Endothelial cell of umbilical vein (primary cell): ENCODE measurements at regions of chr18 and their contacts with region 1.

Region 1: GRCh38 chr18:13800505-13801259 is 23.3 kb upstream of the MC5R start:
- DNase-seq: peak; percentile 61
- H3K4me3 ChIP-seq: peak overlapping the region in 1 of 3 experiments; percentile 37
- H3K27ac ChIP-seq: no peak overlapping the region
- H3K4me1 ChIP-seq: peaks cover 24% of the 10 kb centered on the region
- H3K27me3 ChIP-seq: peaks cover 3 to 10% of the 10 kb centered on the region in 2 experiments
- CTCF ChIP-seq: peak; percentile 57 to 78
- POLR2A ChIP-seq: no peak

Region 2: DNA sequence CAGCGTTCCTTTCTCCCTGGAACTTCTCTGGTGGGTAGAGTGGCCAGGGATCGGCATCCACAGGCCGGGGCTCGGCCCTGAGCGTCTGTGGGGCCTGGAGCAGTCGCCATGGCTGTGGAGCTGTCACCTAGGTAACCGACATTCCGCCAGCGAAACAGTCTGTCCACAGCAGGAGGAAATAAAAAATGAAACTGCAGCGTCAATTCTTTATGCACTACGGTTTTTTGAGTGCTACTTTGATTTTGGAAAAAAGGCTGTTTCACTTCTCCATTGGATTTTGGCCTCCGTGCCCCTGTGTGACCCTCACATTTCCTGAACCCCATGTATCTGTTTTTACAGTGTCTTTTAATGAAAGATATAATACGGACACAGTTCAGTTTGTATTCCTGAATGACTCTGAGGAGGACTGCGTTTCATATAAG is 418.7 kb before region 1 on chr18:
- CTCF ChIA-PET with region 1: no interaction called
- POLR2A ChIA-PET with region 1: no interaction called
- dilution Hi-C with region 1: no loop called
- intact Hi-C with region 1: loop called (anchors 2 kb)
- DNase-seq: peak; percentile 71
- H3K4me3 ChIP-seq: peak overlapping the region in 1 of 3 experiments; percentile 49
- H3K27ac ChIP-seq: peak overlapping the region; percentile 94
- H3K4me1 ChIP-seq: peaks cover 31% of the 10 kb centered on the region
- H3K27me3 ChIP-seq: no peaks in the 10 kb centered on the region
- CTCF ChIP-seq: no peak
- POLR2A ChIP-seq: no peak

Region 3: DNA sequence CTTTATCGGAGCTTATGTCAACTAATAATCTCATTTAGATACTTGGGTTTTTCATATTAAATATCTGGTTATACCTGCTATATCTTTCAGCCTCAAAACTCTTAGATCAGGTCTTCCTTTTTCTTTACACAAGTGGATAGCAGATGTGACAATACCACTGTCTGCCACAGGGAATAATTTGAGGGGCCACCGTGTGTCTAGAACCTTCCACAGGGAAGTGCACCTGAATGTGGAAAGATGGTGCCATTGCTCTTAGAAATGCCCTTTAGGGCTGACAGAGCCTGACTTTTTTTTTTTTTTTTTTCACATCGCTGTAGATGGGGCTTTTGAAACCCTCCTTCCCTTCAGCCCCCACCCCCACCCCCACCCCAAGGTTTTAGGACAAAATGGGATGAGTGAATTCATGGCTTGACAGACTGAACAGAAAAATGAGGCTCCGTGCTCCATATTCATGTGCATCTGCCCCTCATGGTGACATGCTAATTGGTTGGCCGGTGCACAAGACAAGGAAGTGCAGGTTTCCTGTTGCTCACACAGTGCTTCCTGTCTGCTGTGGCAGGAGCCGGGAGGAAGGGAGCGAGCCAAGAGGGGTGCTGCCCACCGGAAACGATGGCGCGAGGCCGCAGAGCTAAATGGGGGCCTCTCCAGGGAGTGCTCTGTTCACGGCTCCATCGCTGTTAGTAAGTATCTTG is 336.1 kb before region 1 on chr18:
- CTCF ChIA-PET with region 1: no interaction called
- POLR2A ChIA-PET with region 1: no interaction called
- dilution Hi-C with region 1: no loop called
- intact Hi-C with region 1: loop called (anchors 10 kb)
- DNase-seq: peak; percentile 94
- H3K4me3 ChIP-seq: peak overlapping the region in 1 of 3 experiments; percentile 39
- H3K27ac ChIP-seq: peak overlapping the region; percentile 98
- H3K4me1 ChIP-seq: peaks cover 24% of the 10 kb centered on the region
- H3K27me3 ChIP-seq: no peaks in the 10 kb centered on the region
- CTCF ChIP-seq: no peak
- POLR2A ChIP-seq: peak; percentile 54

Region 4: DNA sequence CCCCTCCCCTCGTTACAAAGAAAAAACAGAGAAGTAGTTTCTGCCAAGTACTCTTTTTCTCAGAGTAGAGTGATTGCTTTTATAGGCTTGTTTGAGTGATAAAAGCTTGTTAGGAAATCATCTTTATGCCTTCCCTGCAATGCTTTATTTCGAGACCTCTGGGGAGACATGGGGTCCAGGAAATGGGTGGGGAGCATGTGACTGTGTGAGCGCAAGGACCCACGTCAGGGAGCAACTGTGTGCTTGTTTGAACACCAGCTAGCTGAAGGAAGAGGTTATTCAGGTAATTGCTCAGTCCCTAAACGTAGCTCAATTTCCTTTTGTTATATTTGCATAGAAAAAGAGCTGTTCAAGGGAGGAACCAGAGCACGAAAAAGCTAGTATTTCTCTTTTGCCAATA is 261.6 kb before region 1 on chr18:
- CTCF ChIA-PET with region 1: no interaction called
- POLR2A ChIA-PET with region 1: no interaction called
- dilution Hi-C with region 1: no loop called
- intact Hi-C with region 1: no loop called
- DNase-seq: no peak
- H3K4me3 ChIP-seq: no peak overlapping the region
- H3K27ac ChIP-seq: no peak overlapping the region
- H3K4me1 ChIP-seq: no peaks in the 10 kb centered on the region
- H3K27me3 ChIP-seq: peaks cover 9 to 11% of the 10 kb centered on the region in 2 experiments
- CTCF ChIP-seq: no peak
- POLR2A ChIP-seq: no peak

Region 5: GRCh38 chr18:13558124-13558523 is 242.6 kb before region 1 on chr18:
- CTCF ChIA-PET with region 1: interaction called, 14 read pairs
- POLR2A ChIA-PET with region 1: no interaction called
- dilution Hi-C with region 1: no loop called
- intact Hi-C with region 1: loop called (anchors 1 kb)
- DNase-seq: peak; percentile 40
- H3K4me3 ChIP-seq: no peak overlapping the region
- H3K27ac ChIP-seq: no peak overlapping the region
- H3K4me1 ChIP-seq: no peaks in the 10 kb centered on the region
- H3K27me3 ChIP-seq: peaks cover 6 to 23% of the 10 kb centered on the region in 2 experiments
- CTCF ChIP-seq: peak; percentile 47 to 62
- POLR2A ChIP-seq: no peak

Region 6: DNA sequence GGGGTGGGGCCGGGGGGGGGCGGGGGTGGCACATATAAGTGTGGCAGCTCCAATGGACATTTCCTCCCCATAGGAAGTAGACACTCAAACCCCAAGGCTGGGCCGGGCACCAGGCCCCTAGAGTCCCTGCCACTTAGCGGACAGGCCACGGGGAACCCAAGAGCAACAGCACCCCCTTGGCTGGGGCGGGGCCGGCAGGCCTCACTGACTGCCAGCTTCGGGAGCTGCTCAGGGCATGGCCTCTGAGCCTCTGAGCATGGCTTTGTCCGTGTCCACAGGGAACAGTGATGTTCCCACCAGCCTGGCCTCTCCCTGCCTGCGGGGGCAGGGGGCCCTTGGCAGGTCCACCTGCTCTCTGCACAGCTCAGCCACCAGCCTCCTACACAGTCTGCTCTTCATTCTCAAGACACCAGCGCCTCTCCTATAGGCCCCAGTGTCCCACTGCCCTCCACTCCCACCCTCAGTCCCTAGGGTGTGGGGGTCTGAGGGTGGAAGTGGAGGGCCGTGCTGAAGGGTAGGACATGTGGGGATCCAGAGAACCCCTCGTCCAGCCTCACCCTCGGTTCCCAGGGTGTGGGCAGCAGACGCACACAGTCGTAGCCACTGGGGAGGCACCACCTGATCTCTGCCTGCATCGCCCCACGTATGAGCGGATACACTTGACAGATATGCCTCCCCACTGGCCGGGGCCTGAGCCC is 181.0 kb before region 1 on chr18:
- CTCF ChIA-PET with region 1: no interaction called
- POLR2A ChIA-PET with region 1: no interaction called
- dilution Hi-C with region 1: no loop called
- intact Hi-C with region 1: no loop called
- DNase-seq: no peak
- H3K4me3 ChIP-seq: no peak overlapping the region
- H3K27ac ChIP-seq: no peak overlapping the region
- H3K4me1 ChIP-seq: peaks cover 6% of the 10 kb centered on the region
- H3K27me3 ChIP-seq: no peaks in the 10 kb centered on the region
- CTCF ChIP-seq: no peak
- POLR2A ChIP-seq: no peak

Region 7: DNA sequence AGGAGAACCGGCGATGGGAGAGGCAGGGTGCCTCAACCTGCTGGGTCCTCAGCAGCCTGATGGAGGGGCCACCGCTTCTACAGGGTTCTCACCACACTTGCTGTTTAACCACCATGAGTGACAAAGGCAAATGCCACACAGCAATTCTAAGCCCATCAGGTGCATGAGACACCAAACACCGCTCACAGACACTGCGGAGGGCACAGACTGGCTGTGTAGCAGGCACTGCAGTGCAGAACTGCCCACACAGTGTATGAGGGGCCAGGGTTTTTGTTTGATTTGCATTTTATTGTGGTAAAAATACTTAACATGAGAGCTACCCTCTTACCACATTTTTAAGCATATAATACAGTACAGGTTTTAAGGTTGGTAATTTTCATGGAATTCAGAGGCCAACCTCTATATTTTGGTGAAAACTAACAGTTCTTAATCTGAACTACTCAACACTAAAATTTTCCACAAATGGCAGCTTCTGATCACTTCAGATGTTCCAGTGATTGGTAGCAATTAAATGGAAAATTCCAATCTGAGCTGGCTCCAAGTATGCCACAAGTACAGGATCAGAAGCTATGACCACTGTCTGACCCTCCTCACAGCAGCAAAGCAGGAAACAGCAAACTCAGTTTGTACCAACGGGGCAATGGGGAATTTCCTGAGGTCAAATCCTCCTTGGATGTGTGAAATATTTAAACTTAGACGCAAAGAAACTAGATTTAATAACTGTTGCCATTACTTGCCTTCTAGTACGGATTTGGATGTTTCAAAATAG is 142.1 kb before region 1 on chr18:
- CTCF ChIA-PET with region 1: no interaction called
- POLR2A ChIA-PET with region 1: no interaction called
- dilution Hi-C with region 1: no loop called
- intact Hi-C with region 1: loop called (anchors 5 kb)
- DNase-seq: peak; percentile 90
- H3K4me3 ChIP-seq: no peak overlapping the region
- H3K27ac ChIP-seq: peak overlapping the region; percentile 15
- H3K4me1 ChIP-seq: peaks cover 30% of the 10 kb centered on the region
- H3K27me3 ChIP-seq: no peaks in the 10 kb centered on the region
- CTCF ChIP-seq: no peak
- POLR2A ChIP-seq: peak; percentile 28

Region 8: DNA sequence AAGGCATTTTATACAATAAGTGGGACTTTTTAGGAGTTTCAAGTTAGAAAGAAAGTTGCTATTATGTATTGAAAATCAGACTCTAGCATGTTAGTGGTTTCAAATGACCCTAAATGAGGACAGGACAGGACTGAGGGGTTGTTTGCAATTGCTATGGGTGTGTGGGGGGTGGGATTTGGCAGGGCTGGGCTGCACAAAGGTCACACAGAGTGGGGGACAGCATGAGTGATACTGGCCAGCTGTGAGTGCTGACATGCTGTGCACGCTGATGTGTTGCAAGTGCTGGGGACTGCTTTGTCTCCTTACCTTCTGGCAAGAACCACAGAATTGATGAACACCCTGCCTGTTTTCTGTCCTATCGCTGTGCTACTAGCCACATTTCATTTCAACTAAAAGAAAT is 44.4 kb before region 1 on chr18:
- CTCF ChIA-PET with region 1: no interaction called
- POLR2A ChIA-PET with region 1: no interaction called
- dilution Hi-C with region 1: no loop called
- intact Hi-C with region 1: no loop called
- DNase-seq: no peak
- H3K4me3 ChIP-seq: no peak overlapping the region
- H3K27ac ChIP-seq: no peak overlapping the region
- H3K4me1 ChIP-seq: no peaks in the 10 kb centered on the region
- H3K27me3 ChIP-seq: no peaks in the 10 kb centered on the region
- CTCF ChIP-seq: no peak
- POLR2A ChIP-seq: no peak

Region 9: GRCh38 chr18:13813271-13813849 is 12.7 kb after region 1 on chr18:
- CTCF ChIA-PET with region 1: interaction called, 26 read pairs
- POLR2A ChIA-PET with region 1: no interaction called
- dilution Hi-C with region 1: no loop called
- intact Hi-C with region 1: no loop called
- DNase-seq: peak; percentile 74
- H3K4me3 ChIP-seq: no peak overlapping the region
- H3K27ac ChIP-seq: no peak overlapping the region
- H3K4me1 ChIP-seq: no peaks in the 10 kb centered on the region
- H3K27me3 ChIP-seq: no peaks in the 10 kb centered on the region
- CTCF ChIP-seq: peak; percentile 76 to 80
- POLR2A ChIP-seq: no peak

Region 10: DNA sequence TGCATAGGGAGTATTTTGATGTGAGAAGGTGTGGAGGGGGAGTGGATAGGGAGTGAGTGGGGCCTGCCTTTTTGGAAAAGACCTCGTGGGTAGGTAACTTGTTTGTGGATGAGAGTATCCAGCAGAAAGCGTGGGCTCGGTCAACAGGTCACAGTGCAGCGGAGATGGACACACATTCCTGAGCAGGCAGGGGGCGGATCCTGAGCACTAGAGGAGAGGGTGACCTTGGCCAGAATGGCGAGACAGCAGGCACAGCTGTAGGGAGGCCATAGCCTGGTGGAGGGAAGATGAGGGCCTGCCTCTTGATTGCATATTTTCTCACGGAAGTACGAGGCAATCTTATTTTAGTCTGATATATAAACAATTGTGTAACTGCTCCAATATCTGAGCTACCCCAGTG is 118.2 kb after region 1 on chr18:
- CTCF ChIA-PET with region 1: no interaction called
- POLR2A ChIA-PET with region 1: no interaction called
- dilution Hi-C with region 1: no loop called
- intact Hi-C with region 1: no loop called
- DNase-seq: no peak
- H3K4me3 ChIP-seq: no peak overlapping the region
- H3K27ac ChIP-seq: no peak overlapping the region
- H3K4me1 ChIP-seq: no peaks in the 10 kb centered on the region
- H3K27me3 ChIP-seq: no peaks in the 10 kb centered on the region
- CTCF ChIP-seq: no peak
- POLR2A ChIP-seq: no peak